Ovary (tissue), 10 donors: ENCODE measurements at regions of chr11 and their contacts with region 1.

Region 1: GRCh38 chr11:106714199-106714598 is 304.1 kb downstream of the GUCY1A2 start:
- DNase-seq: no peak
- H3K4me3 ChIP-seq: no peak overlapping the region
- H3K27ac ChIP-seq: no peak overlapping the region
- H3K4me1 ChIP-seq: peaks cover 2% of the 10 kb centered on the region
- H3K27me3 ChIP-seq: no peaks in the 10 kb centered on the region
- CTCF ChIP-seq: no peak
- EP300 ChIP-seq: no peak
- POLR2A ChIP-seq: no peak

Region 2: GRCh38 chr11:106446955-106447354 is 267.2 kb before region 1 on chr11:
- intact Hi-C with region 1: no loop called
- DNase-seq: no peak
- H3K4me3 ChIP-seq: no peak overlapping the region
- H3K27ac ChIP-seq: no peak overlapping the region
- H3K4me1 ChIP-seq: no peaks in the 10 kb centered on the region
- H3K27me3 ChIP-seq: no peaks in the 10 kb centered on the region
- CTCF ChIP-seq: no peak
- EP300 ChIP-seq: no peak
- POLR2A ChIP-seq: no peak

Region 3: GRCh38 chr11:107017433-107018227 is 303.4 kb after region 1 on chr11:
- intact Hi-C with region 1: loop called in 1 of 4 experiments (anchors 10 kb)
- DNase-seq: peak; percentile 10 to 64 (median 50)
- H3K4me3 ChIP-seq: peak overlapping the region; percentile 49
- H3K27ac ChIP-seq: no peak overlapping the region
- H3K4me1 ChIP-seq: peaks cover 3% of the 10 kb centered on the region
- H3K27me3 ChIP-seq: no peaks in the 10 kb centered on the region
- CTCF ChIP-seq: peak in 1 of 3 donors; percentile 12
- EP300 ChIP-seq: no peak
- POLR2A ChIP-seq: no peak